Activated CD8-positive, alpha-beta memory T cell treated with anti-CD3 and anti-CD28 coated beads, Interleukin-2, amount 10 ng/mL, durations not matched to agents 7 days and 5 days (primary cell): ENCODE measurements at regions of chr12 and their contacts with region 1.

Region 1: DNA sequence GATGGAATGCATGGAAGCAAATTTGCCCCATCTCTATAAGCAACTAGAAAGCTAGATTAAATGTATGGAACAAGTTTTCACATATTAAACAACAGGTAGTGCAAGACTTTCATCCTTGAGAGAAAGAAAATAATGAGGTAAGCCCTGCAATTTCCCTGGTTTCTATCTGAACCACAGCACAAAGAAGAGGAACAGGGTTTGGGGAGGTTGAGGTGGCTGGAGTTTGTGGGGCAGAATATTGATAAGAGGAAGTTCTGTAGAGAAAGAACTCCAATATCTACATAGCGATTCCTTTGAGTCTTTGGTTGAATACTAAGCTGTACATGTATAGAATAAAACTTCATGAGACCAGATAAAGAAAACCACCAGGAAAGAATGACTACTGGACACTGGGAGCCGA is 96.3 kb upstream of the CCND2 start:
- DNase-seq: no peak
- ATAC-seq: no peak
- H3K4me3 Mint-ChIP-seq: peak overlapping the region; percentile 1
- H3K27ac Mint-ChIP-seq: peak overlapping the region; percentile 52
- H3K4me1 Mint-ChIP-seq: peaks cover 34% of the 10 kb centered on the region
- H3K27me3 Mint-ChIP-seq: no peaks in the 10 kb centered on the region

Region 2: DNA sequence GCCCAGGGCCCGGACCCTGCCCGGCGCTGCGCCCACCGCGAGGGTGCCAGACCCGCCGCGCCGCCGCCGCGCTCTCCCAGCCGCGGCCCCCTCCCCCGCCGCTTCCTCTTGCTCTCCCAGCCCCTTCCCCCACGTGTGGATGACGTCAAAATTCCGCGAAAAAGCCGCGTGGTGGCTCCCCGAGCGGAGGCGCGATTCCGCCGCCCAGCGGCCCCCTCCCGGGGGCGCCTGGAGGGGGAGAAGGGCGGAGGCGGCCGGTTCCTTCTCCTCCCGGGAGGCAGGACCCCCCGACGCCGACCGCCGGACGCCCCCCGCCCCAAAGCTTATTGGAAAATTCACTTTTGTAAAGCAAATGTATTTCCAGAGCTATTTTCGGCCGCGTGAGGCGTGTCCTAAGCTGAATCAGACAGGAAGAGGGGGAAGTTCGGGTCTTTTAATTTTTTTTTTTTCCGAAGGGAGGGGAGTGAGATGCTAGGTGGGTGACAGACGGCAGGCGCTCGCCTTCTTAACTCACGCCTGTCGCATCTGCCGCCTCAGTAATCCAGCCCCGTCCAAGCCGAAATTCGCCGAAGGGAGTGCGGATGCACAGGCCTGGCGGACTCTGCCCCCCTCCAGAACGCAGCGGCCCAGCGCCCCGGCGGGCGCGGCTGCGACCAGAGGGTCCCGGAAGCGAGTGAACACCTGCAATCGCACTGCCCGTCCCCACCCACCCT is 92.2 kb after region 1 on chr12:
- CTCF ChIA-PET with region 1: interaction called, 13 read pairs
- DNase-seq: peak; percentile 97
- ATAC-seq: peak; percentile 14
- H3K4me3 Mint-ChIP-seq: peak overlapping the region; percentile 88
- H3K27ac Mint-ChIP-seq: peak overlapping the region; percentile 100
- H3K4me1 Mint-ChIP-seq: peaks cover 25% of the 10 kb centered on the region
- H3K27me3 Mint-ChIP-seq: peaks cover 12% of the 10 kb centered on the region